HepG2 (cell line): ENCODE measurements at regions of chr15 and their contacts with region 1.

Region 1: DNA sequence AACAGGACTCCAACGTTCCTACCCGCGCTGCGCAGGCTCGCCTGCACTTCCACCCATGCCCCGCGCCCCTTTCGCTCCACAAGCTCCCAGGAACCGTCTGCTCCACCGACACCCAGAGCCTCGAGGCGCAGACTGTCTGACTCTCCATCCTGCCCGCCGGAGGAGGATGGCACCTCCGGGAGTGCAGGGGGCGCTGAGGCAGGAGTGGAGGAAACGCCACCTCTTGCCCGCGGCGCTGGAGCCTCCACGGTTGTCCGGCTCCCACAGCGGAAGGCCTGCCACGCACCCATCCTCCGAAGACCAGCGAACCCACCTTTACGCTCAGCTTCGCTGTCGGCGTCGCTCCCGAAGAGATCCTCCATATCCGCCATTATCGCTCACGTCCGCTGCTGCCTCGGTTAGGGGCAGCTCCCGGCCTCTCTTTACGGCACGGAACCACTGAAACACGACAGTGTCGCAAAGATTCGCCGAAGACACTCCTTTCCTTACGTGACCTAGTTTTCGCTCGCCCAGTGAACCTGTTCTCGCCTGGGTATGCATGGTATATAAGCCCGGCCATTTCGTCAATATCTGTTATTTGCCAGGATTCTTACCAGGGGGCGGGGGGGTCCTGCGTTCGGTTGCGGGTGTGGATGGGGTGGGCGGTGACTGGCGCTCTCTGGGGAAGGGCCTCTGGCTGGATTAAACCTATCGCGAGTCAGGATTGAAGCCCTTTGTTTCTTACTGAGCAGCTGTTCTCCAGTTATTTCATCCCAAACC is at the start of gene LEO1:
- DNase-seq: peak; percentile 96
- ATAC-seq: peak; percentile 89
- H3K4me3 ChIP-seq: peak within 1 kb of the TSS; percentile 70 to 100 (median 97)
- H3K27ac ChIP-seq: peak within 1 kb of the TSS; percentile 79
- H3K4me1 ChIP-seq: peaks cover 41% of the 10 kb centered on the region
- H3K27me3 ChIP-seq: no peaks in the 10 kb centered on the region; a peak in 1 of 5 replicates
- CTCF ChIP-seq: peak; percentile 64
- EP300 ChIP-seq: no peak
- POLR2A ChIP-seq: peak; percentile 76 to 77; a peak in 3 of 4 replicates
- RAD21 ChIP-seq: no peak
- total RNA-seq, gene LEO1: 60.3 and 103 TPM in 2 replicates

Region 2: GRCh38 chr15:51992976-51993375 is 21.4 kb after region 1 on chr15:
- CTCF ChIA-PET with region 1: no interaction called
- POLR2A ChIA-PET with region 1: interaction called, 15 read pairs
- in situ Hi-C with region 1: no loop called
- intact Hi-C with region 1: no loop called
- DNase-seq: peak; percentile 77
- ATAC-seq: peak; percentile 50
- H3K4me3 ChIP-seq: no peak overlapping the region
- H3K27ac ChIP-seq: no peak overlapping the region
- H3K4me1 ChIP-seq: peaks cover 30% of the 10 kb centered on the region
- H3K27me3 ChIP-seq: no peaks in the 10 kb centered on the region
- CTCF ChIP-seq: no peak
- EP300 ChIP-seq: peak in 1 of 2 experiments; percentile 45; a peak in 1 of 4 replicates
- POLR2A ChIP-seq: no peak
- RAD21 ChIP-seq: no peak

Region 3: DNA sequence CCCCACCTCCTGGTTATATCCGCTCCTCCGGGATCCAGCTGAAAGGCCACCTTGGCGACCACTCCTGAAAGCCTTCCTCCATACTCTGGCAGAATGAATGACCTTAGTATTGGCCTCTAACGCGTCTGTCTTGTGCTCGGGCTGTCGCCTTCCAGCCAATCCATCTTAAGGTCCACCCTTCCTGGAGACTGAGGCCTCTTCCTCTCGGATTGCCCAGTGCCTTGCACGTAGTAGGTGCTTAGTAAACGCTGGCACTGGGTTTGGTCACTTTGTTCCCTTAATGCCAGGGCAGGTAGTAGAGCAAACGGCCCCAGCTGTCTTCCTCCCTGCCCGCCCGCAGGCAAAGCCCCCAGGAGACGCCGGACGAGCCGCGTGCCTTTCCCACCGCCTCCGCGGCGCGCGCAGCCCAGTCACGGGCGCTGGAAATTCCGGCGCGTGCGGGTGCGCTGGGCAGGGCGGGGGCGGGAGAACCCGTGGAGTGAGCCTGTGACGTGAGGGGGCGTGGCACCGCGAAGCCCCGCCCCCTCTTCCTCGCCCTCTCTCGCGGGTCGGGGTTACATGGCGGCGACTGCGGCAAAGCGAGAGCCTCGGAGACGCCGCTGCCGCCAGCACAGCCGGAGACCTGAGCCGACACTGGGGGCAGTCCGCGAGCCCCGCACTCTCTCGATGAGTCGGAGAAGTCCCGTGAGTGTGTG is 47.3 kb after region 1 on chr15 and contains the start of gene MAPK6:
- CTCF ChIA-PET with region 1: no interaction called
- POLR2A ChIA-PET with region 1: interaction called, 21 read pairs
- in situ Hi-C with region 1: no loop called
- intact Hi-C with region 1: no loop called
- DNase-seq: peak; percentile 80
- ATAC-seq: peak; percentile 68
- H3K4me3 ChIP-seq: peak within 1 kb of the TSS; percentile 62 to 99 (median 77)
- H3K27ac ChIP-seq: peak within 1 kb of the TSS; percentile 99
- H3K4me1 ChIP-seq: peaks cover 38% of the 10 kb centered on the region
- H3K27me3 ChIP-seq: no peaks in the 10 kb centered on the region; a peak in 1 of 5 replicates
- CTCF ChIP-seq: 0 out of 2 replicates have a peak, but pooled peaks have one; percentile 11
- EP300 ChIP-seq: peak; percentile 11 to 23; a peak in 1 of 4 replicates
- POLR2A ChIP-seq: peak; percentile 81 to 87
- RAD21 ChIP-seq: peak; percentile 49; the same call in 1 of the 2 replicates
- total RNA-seq, gene MAPK6: 99.7 and 188 TPM in 2 replicates

Region 4: GRCh38 chr15:52179278-52180195 is 208.0 kb after region 1 on chr15:
- CTCF ChIA-PET with region 1: no interaction called
- POLR2A ChIA-PET with region 1: interaction called, 10 read pairs
- in situ Hi-C with region 1: no loop called
- intact Hi-C with region 1: no loop called
- DNase-seq: peak; percentile 57
- ATAC-seq: peak; percentile 85
- H3K4me3 ChIP-seq: peak overlapping the region; percentile 66 to 80 (median 76)
- H3K27ac ChIP-seq: no peak overlapping the region
- H3K4me1 ChIP-seq: peaks cover 54% of the 10 kb centered on the region
- H3K27me3 ChIP-seq: 0 out of 5 replicates have a peak, but pooled peaks cover 0 to 4% of the 10 kb centered on the region in 2 experiments
- CTCF ChIP-seq: no peak
- EP300 ChIP-seq: no peak
- POLR2A ChIP-seq: peak; percentile 38 to 65; a peak in 3 of 4 replicates
- RAD21 ChIP-seq: no peak

Region 5: GRCh38 chr15:52651868-52652267 is 680.3 kb after region 1 on chr15:
- CTCF ChIA-PET with region 1: no interaction called
- POLR2A ChIA-PET with region 1: no interaction called
- in situ Hi-C with region 1: no loop called
- intact Hi-C with region 1: loop called (anchors 2 kb)
- DNase-seq: peak; percentile 80
- ATAC-seq: peak; percentile 100
- H3K4me3 ChIP-seq: peak overlapping the region in 2 of 3 experiments; percentile 51 to 56; a peak in 3 of 6 replicates
- H3K27ac ChIP-seq: peak overlapping the region; percentile 56
- H3K4me1 ChIP-seq: peaks cover 17% of the 10 kb centered on the region
- H3K27me3 ChIP-seq: no peaks in the 10 kb centered on the region
- CTCF ChIP-seq: no peak
- EP300 ChIP-seq: peak in 1 of 2 experiments; percentile 61; a peak in 2 of 4 replicates
- POLR2A ChIP-seq: no peak
- RAD21 ChIP-seq: no peak